PC-9 (cell line): ENCODE measurements at regions of chr2 and their contacts with region 1.

Region 1: DNA sequence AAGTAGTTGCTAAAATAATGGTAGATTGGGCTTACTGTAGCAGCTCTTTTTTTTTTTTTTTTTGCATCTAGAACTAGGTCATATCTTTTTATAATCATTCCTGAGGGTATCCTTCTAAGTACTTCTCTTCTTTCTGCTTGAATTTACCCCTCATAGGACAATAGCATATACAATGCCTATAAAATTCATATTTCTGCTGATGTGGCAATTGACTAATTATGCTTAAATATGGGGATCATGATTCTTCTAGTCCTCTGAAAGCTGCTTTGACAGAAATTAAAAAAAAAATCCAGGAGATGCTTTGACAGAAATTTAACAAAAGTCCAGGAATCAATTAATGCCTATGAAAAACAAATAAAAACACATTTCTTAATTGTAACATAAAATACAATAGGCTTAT is 358.4 kb downstream of the CCDC85A start:
- DNase-seq: no peak
- H3K4me3 ChIP-seq: no peak overlapping the region
- H3K27ac ChIP-seq: no peak overlapping the region
- H3K4me1 ChIP-seq: no peaks in the 10 kb centered on the region
- H3K27me3 ChIP-seq: no peaks in the 10 kb centered on the region
- CTCF ChIP-seq: no peak

Region 2: GRCh38 chr2:56474412-56475158 is 67.6 kb before region 1 on chr2:
- CTCF ChIA-PET with region 1: no interaction called
- POLR2A ChIA-PET with region 1: no interaction called
- intact Hi-C with region 1: no loop called
- DNase-seq: no peak
- H3K4me3 ChIP-seq: no peak overlapping the region
- H3K27ac ChIP-seq: no peak overlapping the region
- H3K4me1 ChIP-seq: no peaks in the 10 kb centered on the region
- H3K27me3 ChIP-seq: no peaks in the 10 kb centered on the region
- CTCF ChIP-seq: no peak

Region 3: DNA sequence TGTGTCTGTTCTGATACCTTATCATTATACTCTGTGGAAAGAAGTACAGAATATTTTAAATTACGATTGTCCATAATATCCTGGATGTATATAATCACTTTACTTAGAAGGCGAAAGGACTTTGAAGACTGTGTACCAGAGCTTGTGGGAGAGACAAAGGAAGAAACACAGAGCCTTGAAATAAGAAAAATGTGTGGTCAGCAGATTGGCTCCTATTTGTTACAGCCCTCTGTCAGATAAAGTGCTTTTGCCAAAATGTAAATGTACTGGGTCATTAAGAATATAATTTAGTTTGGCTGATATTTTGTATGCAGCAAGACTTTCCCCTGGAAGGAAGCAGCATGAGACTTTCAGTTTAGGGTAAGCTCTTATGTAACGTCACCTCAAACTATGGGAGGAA is 84.7 kb after region 1 on chr2:
- CTCF ChIA-PET with region 1: no interaction called
- POLR2A ChIA-PET with region 1: interaction called, 14 read pairs
- intact Hi-C with region 1: no loop called
- DNase-seq: no peak
- H3K4me3 ChIP-seq: no peak overlapping the region
- H3K27ac ChIP-seq: no peak overlapping the region
- H3K4me1 ChIP-seq: no peaks in the 10 kb centered on the region
- H3K27me3 ChIP-seq: no peaks in the 10 kb centered on the region
- CTCF ChIP-seq: no peak

Region 4: GRCh38 chr2:56801770-56802169 is 259.6 kb after region 1 on chr2:
- CTCF ChIA-PET with region 1: no interaction called
- POLR2A ChIA-PET with region 1: no interaction called
- intact Hi-C with region 1: no loop called
- DNase-seq: no peak
- H3K4me3 ChIP-seq: no peak overlapping the region
- H3K27ac ChIP-seq: no peak overlapping the region
- H3K4me1 ChIP-seq: no peaks in the 10 kb centered on the region
- H3K27me3 ChIP-seq: no peaks in the 10 kb centered on the region
- CTCF ChIP-seq: no peak